ENCODE measurements at regions of chr7 and their contacts with region 1.

Region 1: DNA sequence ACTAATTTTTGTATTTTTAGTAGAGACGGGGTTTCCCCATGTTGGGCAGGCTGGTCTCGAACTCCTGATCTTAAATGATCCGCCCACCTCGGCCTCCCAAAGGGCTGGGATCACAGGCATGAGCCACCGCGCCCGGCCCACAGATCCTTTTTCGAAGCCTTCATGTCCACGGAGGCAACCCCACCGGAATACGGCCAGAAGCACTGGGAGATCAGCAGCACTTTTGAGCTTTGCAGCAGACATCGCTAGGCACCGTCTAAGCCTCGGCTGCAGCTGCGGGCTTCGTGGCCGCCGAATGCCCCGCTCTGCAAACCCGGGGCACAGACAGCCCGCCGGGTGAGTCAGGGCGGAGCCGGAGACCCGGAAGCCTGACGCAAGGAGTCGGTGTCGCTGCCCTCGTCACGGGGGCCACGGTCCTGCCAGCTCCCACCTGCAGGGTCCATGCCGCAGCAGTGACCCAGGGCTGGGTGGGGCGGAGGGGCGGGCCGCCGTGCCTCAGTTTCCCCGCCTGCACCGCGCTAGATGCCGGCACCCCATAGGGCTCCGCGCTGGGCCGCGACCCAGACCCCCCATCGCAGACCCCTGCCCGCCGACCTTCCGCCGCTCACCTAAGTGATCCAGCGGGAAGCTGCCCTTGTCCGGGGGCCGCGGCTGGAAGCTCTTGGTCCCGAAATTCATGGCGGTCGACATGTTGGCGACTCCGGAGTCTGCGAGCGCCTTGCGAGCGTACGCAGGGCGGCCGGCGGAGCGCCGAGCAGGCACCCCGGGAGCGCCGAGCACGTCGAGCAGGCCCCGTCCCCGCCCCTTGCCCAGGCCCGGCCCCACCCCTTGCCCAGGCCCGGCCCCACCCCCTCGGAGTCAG is at the start of gene COX19:
- DNase-seq: peak; percentile 78 to 94 (median 88)
- ATAC-seq: peak; percentile 88 to 95 (median 92)
- H3K4me3 ChIP-seq: peak within 1 kb of the TSS; percentile 84 to 92
- H3K4me3 Mint-ChIP-seq: peak within 1 kb of the TSS; percentile 85 to 93 (median 88)
- H3K27ac ChIP-seq: peak within 1 kb of the TSS; percentile 95
- H3K27ac Mint-ChIP-seq: peak within 1 kb of the TSS; percentile 78 to 86
- H3K4me1 ChIP-seq: peaks cover 8 to 34% of the 10 kb centered on the region in 2 experiments
- H3K4me1 Mint-ChIP-seq: peaks cover 30 to 35% (median 34%) of the 10 kb centered on the region in 3 donors
- H3K27me3 ChIP-seq: peaks cover 0 to under 1% of the 10 kb centered on the region in 2 experiments
- H3K27me3 Mint-ChIP-seq: no peaks in the 10 kb centered on the region
- total RNA-seq, gene COX19: 38.0 to 50.9 (median 43.7) TPM

Region 2: DNA sequence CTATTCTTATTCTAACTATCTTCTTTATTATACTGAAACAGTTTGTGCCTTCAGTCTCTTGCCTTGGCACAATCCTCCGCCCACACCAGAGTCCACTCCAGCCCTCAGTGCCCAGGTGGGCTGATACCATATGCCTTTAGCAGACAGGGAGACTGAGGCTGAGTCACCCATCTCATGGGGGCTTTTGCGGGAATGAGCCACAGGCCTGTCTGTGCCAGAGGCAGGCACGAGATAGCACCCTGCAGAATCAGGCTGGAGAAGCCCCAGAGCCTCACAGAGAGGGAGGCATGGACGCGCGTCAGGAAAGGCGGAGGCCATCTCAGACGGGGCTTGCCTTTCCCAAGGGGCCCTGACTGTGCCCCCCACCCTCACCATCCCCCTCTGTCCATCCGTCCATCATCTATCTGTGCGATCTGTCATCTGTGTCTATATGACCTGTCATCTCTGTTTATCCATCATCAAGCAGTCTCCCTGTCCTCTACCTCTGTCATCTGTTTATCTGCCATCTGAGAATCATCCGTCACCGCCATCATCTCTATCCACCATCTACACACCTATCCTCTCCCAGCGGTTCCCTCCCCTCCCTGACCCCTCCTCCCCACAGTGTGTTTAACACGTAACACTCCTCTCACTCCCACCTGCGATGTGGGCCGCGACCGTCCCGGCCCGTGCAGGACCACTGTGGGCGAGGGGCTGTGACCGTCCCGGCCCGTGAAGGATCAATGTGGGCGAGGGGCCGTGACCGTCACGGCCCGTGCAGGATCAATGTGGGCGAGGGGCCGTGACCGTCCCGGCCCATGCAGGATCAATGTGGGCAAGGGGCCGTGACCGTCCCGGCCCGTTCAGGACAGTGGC is 13.3 kb before region 1 on chr7:
- CTCF ChIA-PET with region 1: interaction called in 1 of 2 experiments, 3 read pairs
- POLR2A ChIA-PET with region 1: interaction called, 6 to 12 read pairs
- DNase-seq: no peak
- ATAC-seq: no peak
- H3K4me3 ChIP-seq: no peak overlapping the region
- H3K4me3 Mint-ChIP-seq: no peak overlapping the region
- H3K27ac ChIP-seq: no peak overlapping the region
- H3K27ac Mint-ChIP-seq: no peak overlapping the region
- H3K4me1 ChIP-seq: peaks cover 4 to 30% of the 10 kb centered on the region in 2 experiments
- H3K4me1 Mint-ChIP-seq: peaks cover 16 to 29% (median 22%) of the 10 kb centered on the region in 3 donors
- H3K27me3 ChIP-seq: peaks cover 0 to 42% of the 10 kb centered on the region in 2 experiments
- H3K27me3 Mint-ChIP-seq: no peaks in the 10 kb centered on the region

Region 3: GRCh38 chr7:992709-993607 is 17.9 kb after region 1 on chr7:
- CTCF ChIA-PET with region 1: interaction called, 3 to 11 read pairs
- POLR2A ChIA-PET with region 1: no interaction called
- DNase-seq: peak; percentile 80 to 96 (median 92)
- ATAC-seq: peak; percentile 99
- H3K4me3 ChIP-seq: no peak overlapping the region
- H3K4me3 Mint-ChIP-seq: no peak overlapping the region
- H3K27ac ChIP-seq: no peak overlapping the region
- H3K27ac Mint-ChIP-seq: no peak overlapping the region
- H3K4me1 ChIP-seq: peaks cover 0 to 13% of the 10 kb centered on the region in 2 experiments
- H3K4me1 Mint-ChIP-seq: peaks cover 4 to 5% (median 4%) of the 10 kb centered on the region in 3 donors
- H3K27me3 ChIP-seq: peaks cover 0 to 17% of the 10 kb centered on the region in 2 experiments
- H3K27me3 Mint-ChIP-seq: peaks cover 0 to 2% of the 10 kb centered on the region in 2 donors

Region 4: DNA sequence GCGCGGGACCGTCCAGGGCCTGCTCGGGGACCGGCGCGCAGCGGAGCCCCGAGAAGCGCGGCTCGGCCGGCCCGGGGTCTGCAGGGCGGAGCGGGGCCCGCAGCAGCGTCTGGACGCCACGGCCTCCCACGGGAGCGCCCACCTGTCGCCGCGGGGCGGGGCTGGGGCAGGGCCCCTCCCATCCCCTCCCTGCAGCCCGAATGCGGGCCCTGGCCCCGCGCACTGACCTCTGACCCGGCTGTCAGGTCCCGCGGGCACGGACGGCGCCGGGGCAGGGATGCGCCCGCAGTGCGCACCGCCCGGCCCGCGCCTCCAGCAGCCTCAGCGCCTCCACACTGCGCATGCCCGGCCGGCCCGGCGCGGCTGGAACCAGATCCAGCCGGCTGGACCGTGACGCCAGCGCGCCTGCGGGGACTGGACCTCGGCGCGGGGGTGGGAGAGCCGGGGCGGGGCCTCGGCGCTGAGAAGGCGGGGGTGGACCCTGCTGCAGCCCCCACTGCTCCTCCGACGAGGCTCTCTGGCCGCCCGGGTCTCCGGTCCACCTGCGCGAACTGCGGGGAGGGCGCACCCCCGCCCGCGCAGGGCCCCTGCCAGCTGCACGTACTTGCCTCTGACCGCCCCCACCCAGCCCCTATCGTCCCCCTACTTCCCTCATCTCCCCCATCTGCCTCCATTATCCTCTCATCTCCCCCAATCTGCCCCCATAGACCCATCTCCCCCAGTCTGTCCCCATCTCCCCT is 53.1 kb after region 1 on chr7:
- CTCF ChIA-PET with region 1: no interaction called
- POLR2A ChIA-PET with region 1: no interaction called
- DNase-seq: peak; percentile 30 to 85 (median 59)
- ATAC-seq: peak; percentile 74 to 84 (median 84)
- H3K4me3 ChIP-seq: peak overlapping the region; percentile 47 to 56
- H3K4me3 Mint-ChIP-seq: peak overlapping the region; percentile 73 to 81 (median 79)
- H3K27ac ChIP-seq: peak overlapping the region; percentile 77
- H3K27ac Mint-ChIP-seq: peak overlapping the region in 1 of 2 donors; percentile 71
- H3K4me1 ChIP-seq: peaks cover 0 to 40% of the 10 kb centered on the region in 2 experiments
- H3K4me1 Mint-ChIP-seq: peaks cover 32 to 56% (median 43%) of the 10 kb centered on the region in 3 donors
- H3K27me3 ChIP-seq: no peaks in the 10 kb centered on the region
- H3K27me3 Mint-ChIP-seq: no peaks in the 10 kb centered on the region

Region 5: DNA sequence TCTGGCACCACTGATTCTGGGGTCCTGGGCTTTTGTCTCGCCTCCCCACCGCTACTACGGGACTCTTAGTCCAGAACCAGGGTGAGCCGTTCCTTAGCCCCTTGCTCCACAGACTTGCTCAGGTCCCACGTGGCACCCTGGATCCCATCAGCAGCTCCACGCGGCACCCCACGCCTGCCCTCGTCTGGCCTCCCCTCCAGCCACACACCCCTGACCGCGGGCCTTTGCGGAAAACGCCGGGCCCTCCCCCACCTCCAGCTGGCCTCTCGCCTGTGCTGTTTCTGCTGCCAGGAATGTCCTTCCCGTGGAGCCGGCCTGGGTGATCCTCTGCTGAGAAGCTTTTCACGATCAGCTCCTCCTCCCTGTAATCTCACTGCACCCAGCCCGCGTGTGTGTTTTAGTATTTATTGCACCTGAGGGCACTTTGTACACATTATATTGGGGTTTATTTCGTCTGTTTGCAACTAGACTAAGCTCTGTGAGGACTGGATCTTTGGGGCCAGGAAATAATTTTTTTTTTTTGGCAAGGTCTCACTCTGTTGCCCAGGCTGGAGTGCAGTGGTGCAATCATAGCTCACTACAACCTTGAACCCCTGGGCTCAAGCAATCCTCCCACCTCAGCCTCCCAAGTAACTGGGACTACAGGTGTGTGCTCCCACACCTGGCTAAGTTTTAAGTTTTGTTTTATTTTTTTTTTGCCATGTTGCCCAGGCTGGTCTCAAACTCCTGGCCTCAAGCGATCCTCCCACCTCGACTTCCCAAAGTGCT is 1646.2 kb after region 1 on chr7:
- CTCF ChIA-PET with region 1: no interaction called
- POLR2A ChIA-PET with region 1: no interaction called
- DNase-seq: no peak
- ATAC-seq: no peak
- H3K4me3 ChIP-seq: no peak overlapping the region
- H3K4me3 Mint-ChIP-seq: no peak overlapping the region
- H3K27ac ChIP-seq: no peak overlapping the region
- H3K27ac Mint-ChIP-seq: no peak overlapping the region
- H3K4me1 ChIP-seq: no peaks in the 10 kb centered on the region
- H3K4me1 Mint-ChIP-seq: no peaks in the 10 kb centered on the region
- H3K27me3 ChIP-seq: peaks cover 0 to 12% of the 10 kb centered on the region in 2 experiments
- H3K27me3 Mint-ChIP-seq: no peaks in the 10 kb centered on the region

Measured in T-cell (primary cell).